ENCODE measurements at regions of chr14 and their contacts with region 1.

Region 1: GRCh38 chr14:103104654-103105452 is 10.3 kb downstream of the EXOC3L4 start:
- DNase-seq: no peak
- ATAC-seq: peak; percentile 83
- H3K4me3 ChIP-seq: no peak overlapping the region
- H3K27ac ChIP-seq: no peak overlapping the region
- H3K4me1 ChIP-seq: peaks cover 42% of the 10 kb centered on the region
- H3K27me3 ChIP-seq: peaks cover 5 to 11% of the 10 kb centered on the region in 2 experiments; a peak in 2 of 4 replicates
- CTCF ChIP-seq: peak; percentile 96 to 98 (median 98)
- EP300 ChIP-seq: no peak
- POLR2A ChIP-seq: no peak
- RAD21 ChIP-seq: peak; percentile 93

Region 2: GRCh38 chr14:103078093-103078749 is 26.6 kb before region 1 on chr14:
- CTCF ChIA-PET with region 1: interaction called, 16 read pairs
- POLR2A ChIA-PET with region 1: no interaction called
- RAD21 ChIA-PET with region 1: interaction called, 14 read pairs
- SMC1A ChIA-PET with region 1: interaction called, 8 read pairs
- in situ Hi-C with region 1: no loop called
- intact Hi-C with region 1: no loop called
- DNase-seq: peak; percentile 48
- ATAC-seq: peak; percentile 74
- H3K4me3 ChIP-seq: no peak overlapping the region
- H3K27ac ChIP-seq: no peak overlapping the region
- H3K4me1 ChIP-seq: peaks cover 8% of the 10 kb centered on the region
- H3K27me3 ChIP-seq: no peaks in the 10 kb centered on the region; a peak in 1 of 4 replicates
- CTCF ChIP-seq: peak; percentile 75 to 93 (median 86)
- EP300 ChIP-seq: no peak
- POLR2A ChIP-seq: no peak
- RAD21 ChIP-seq: peak; percentile 83

Region 3: DNA sequence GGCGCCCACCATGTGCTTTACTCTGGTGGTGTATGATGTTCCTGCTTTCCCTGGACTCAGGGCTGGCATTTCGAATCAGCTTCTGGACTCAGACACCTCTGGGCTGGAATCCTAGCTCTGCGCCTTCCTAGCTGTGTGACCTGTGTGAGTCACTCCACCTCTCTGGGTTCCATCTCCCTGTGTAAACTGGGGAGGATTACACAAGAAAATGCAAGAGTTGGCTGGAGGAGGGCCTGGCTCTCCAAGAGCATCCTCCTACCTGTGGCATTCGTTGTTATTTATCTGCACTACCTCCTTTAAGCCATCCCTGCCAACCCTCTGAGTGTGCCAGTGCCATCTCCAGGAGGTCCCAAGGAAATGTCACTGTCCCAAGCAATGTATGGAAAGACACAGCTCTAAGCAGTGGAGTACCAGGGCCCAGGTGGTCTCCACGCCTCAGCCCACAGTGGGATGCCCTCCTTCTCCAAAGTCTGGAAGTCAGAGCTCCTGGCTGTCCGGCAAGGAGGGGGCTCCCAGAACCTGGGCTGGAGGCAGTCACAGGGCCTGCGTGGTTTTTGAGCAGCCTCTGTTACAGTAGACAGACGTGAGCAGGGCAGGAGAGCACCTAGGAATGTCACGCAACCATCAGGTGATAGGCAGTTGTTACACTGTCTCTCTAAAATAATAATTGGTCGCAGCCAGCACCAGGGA is 11.2 kb after region 1 on chr14:
- CTCF ChIA-PET with region 1: interaction called, 23 read pairs
- POLR2A ChIA-PET with region 1: interaction called, 3 read pairs
- RAD21 ChIA-PET with region 1: interaction called, 8 read pairs
- SMC1A ChIA-PET with region 1: interaction called, 11 read pairs
- in situ Hi-C with region 1: no loop called
- intact Hi-C with region 1: no loop called
- DNase-seq: no peak
- ATAC-seq: no peak
- H3K4me3 ChIP-seq: no peak overlapping the region
- H3K27ac ChIP-seq: no peak overlapping the region
- H3K4me1 ChIP-seq: peaks cover 50% of the 10 kb centered on the region
- H3K27me3 ChIP-seq: no peaks in the 10 kb centered on the region
- CTCF ChIP-seq: no peak
- EP300 ChIP-seq: no peak
- POLR2A ChIP-seq: no peak
- RAD21 ChIP-seq: no peak

Region 4: GRCh38 chr14:103141119-103141796 is 36.4 kb after region 1 on chr14:
- CTCF ChIA-PET with region 1: interaction called, 176 read pairs
- POLR2A ChIA-PET with region 1: interaction called, 7 read pairs
- RAD21 ChIA-PET with region 1: interaction called, 120 read pairs
- SMC1A ChIA-PET with region 1: interaction called, 60 read pairs
- in situ Hi-C with region 1: no loop called
- intact Hi-C with region 1: loop called (anchors 1 kb)
- DNase-seq: no peak
- ATAC-seq: peak; percentile 50
- H3K4me3 ChIP-seq: peak overlapping the region; percentile 7; the same call in 1 of the 2 replicates
- H3K27ac ChIP-seq: peak overlapping the region; percentile 12; the same call in 1 of the 2 replicates
- H3K4me1 ChIP-seq: peaks cover 16% of the 10 kb centered on the region
- H3K27me3 ChIP-seq: no peaks in the 10 kb centered on the region
- CTCF ChIP-seq: peak; percentile 82 to 95 (median 92)
- EP300 ChIP-seq: no peak
- POLR2A ChIP-seq: no peak
- RAD21 ChIP-seq: peak; percentile 74

Region 5: GRCh38 chr14:103192351-103192751 is 87.5 kb after region 1 on chr14:
- CTCF ChIA-PET with region 1: interaction called, 202 read pairs
- POLR2A ChIA-PET with region 1: no interaction called
- RAD21 ChIA-PET with region 1: interaction called, 28 read pairs
- SMC1A ChIA-PET with region 1: no interaction called
- in situ Hi-C with region 1: no loop called
- intact Hi-C with region 1: no loop called
- DNase-seq: no peak
- ATAC-seq: no peak
- H3K4me3 ChIP-seq: no peak overlapping the region
- H3K27ac ChIP-seq: no peak overlapping the region
- H3K4me1 ChIP-seq: no peaks in the 10 kb centered on the region
- H3K27me3 ChIP-seq: peaks cover 0 to 2% of the 10 kb centered on the region in 2 experiments; a peak in 1 of 4 replicates
- CTCF ChIP-seq: no peak
- EP300 ChIP-seq: no peak
- POLR2A ChIP-seq: no peak
- RAD21 ChIP-seq: no peak

Region 6: GRCh38 chr14:103346286-103346685 is 241.4 kb after region 1 on chr14:
- CTCF ChIA-PET with region 1: no interaction called
- POLR2A ChIA-PET with region 1: no interaction called
- RAD21 ChIA-PET with region 1: no interaction called
- SMC1A ChIA-PET with region 1: no interaction called
- in situ Hi-C with region 1: no loop called
- intact Hi-C with region 1: no loop called
- DNase-seq: no peak
- ATAC-seq: peak; percentile 8; the same call in 2 of the 3 replicates
- H3K4me3 ChIP-seq: no peak overlapping the region
- H3K27ac ChIP-seq: no peak overlapping the region
- H3K4me1 ChIP-seq: no peaks in the 10 kb centered on the region
- H3K27me3 ChIP-seq: no peaks in the 10 kb centered on the region
- CTCF ChIP-seq: no peak
- EP300 ChIP-seq: no peak
- POLR2A ChIP-seq: no peak
- RAD21 ChIP-seq: no peak

Region 7: GRCh38 chr14:103391048-103391447 is 286.2 kb after region 1 on chr14:
- CTCF ChIA-PET with region 1: interaction called, 18 read pairs
- POLR2A ChIA-PET with region 1: no interaction called
- RAD21 ChIA-PET with region 1: interaction called, 12 read pairs
- SMC1A ChIA-PET with region 1: no interaction called
- in situ Hi-C with region 1: no loop called
- intact Hi-C with region 1: no loop called
- DNase-seq: no peak
- ATAC-seq: peak; percentile 68
- H3K4me3 ChIP-seq: no peak overlapping the region
- H3K27ac ChIP-seq: no peak overlapping the region
- H3K4me1 ChIP-seq: peaks cover 22% of the 10 kb centered on the region
- H3K27me3 ChIP-seq: no peaks in the 10 kb centered on the region
- CTCF ChIP-seq: peak; percentile 58 to 78 (median 67)
- EP300 ChIP-seq: no peak
- POLR2A ChIP-seq: no peak
- RAD21 ChIP-seq: peak; percentile 29; the same call in 1 of the 2 replicates